ENCODE measurements at regions of chr6 and their contacts with region 1.

Region 1: DNA sequence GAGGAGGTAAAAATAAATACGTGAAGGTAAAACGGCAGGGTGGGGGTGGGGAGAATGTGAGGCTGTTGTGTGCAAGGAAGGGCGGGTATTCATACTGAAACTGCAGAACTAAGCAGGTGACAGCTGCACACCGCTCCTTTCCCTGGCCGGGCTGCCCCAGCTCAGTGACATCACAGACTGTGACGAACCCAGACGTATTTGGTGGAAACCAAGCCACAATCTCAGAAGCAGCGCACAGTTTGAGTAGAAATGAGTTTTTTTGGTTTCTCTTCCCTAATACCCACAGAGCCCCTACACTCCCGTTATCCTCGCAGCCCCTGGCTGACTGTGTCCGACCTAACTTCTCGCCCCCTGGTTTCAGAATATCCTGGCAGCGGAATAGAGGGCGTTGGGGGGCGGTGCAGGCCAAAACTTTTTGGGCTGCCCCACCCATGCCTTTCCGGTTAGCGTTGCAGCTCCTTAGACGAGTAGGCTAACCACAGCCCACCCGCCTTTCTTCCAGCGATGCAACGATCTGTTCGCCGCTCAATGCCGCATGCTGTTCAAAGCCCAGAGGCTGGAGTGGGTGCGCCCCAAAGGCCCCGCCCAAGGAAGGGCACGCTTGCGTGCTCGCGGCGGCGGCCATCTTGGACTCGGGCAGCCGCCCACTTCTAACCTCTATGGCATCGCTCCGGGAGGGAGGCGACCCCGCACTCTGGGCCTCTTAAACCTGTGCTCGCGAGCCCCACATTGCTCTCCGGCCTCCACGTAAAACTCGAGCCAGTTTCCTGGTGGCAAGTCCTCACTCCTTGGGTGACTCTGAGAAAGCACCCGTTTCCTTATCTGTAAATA is 9.1 kb downstream of the BAK1 start:
- DNase-seq: peak; percentile 92 to 98 (median 95)
- H3K4me3 ChIP-seq: peak overlapping the region; percentile 13 to 72
- H3K4me3 Mint-ChIP-seq: peak overlapping the region; percentile 90 to 97 (median 94)
- H3K27ac ChIP-seq: peak overlapping the region; percentile 93
- H3K27ac Mint-ChIP-seq: peak overlapping the region; percentile 99 to 100 (median 100)
- H3K4me1 ChIP-seq: peaks cover 23% of the 10 kb centered on the region
- H3K4me1 Mint-ChIP-seq: peaks cover 12 to 44% (median 31%) of the 10 kb centered on the region in 4 donors
- H3K27me3 ChIP-seq: no peaks in the 10 kb centered on the region
- H3K27me3 Mint-ChIP-seq: no peaks in the 10 kb centered on the region

Region 2: DNA sequence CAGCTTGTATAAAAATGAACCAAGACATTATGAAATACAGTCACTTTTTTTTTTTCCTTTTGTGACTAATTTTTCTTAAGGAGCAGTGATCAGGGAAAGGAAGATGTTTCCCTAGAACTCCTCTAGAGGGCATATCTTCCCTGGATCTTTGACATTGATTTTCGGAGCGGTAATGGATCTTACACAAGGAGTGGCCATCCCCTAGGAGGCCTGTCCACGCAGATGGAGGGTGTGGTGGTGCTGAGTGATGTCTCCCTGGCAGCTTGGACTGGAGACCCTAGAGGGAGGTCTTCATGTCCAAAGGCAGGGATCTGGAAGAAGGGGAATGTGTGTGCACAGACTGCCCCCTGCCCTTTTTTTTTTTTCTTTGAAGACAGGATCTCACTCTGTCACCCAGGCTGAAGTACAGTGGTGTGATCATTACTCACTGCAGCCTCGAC is 186.4 kb before region 1 on chr6:
- CTCF ChIA-PET with region 1: no interaction called
- POLR2A ChIA-PET with region 1: no interaction called
- intact Hi-C with region 1: no loop called
- DNase-seq: no peak
- H3K4me3 ChIP-seq: no peak overlapping the region
- H3K4me3 Mint-ChIP-seq: no peak overlapping the region
- H3K27ac ChIP-seq: no peak overlapping the region
- H3K27ac Mint-ChIP-seq: no peak overlapping the region
- H3K4me1 ChIP-seq: no peaks in the 10 kb centered on the region
- H3K4me1 Mint-ChIP-seq: no peaks in the 10 kb centered on the region
- H3K27me3 ChIP-seq: no peaks in the 10 kb centered on the region
- H3K27me3 Mint-ChIP-seq: no peaks in the 10 kb centered on the region

Region 3: GRCh38 chr6:33417903-33418689 is 152.9 kb before region 1 on chr6 and contains the start of gene CUTA:
- CTCF ChIA-PET with region 1: no interaction called
- POLR2A ChIA-PET with region 1: interaction called, 15 read pairs
- intact Hi-C with region 1: loop called (anchors 2 kb)
- DNase-seq: peak; percentile 97 to 100 (median 100)
- H3K4me3 ChIP-seq: peak within 1 kb of the TSS; percentile 82 to 94
- H3K4me3 Mint-ChIP-seq: peak within 1 kb of the TSS; percentile 87 to 97 (median 94)
- H3K27ac ChIP-seq: peak within 1 kb of the TSS; percentile 97
- H3K27ac Mint-ChIP-seq: peak within 1 kb of the TSS; percentile 99 to 100 (median 99)
- H3K4me1 ChIP-seq: peaks cover 72% of the 10 kb centered on the region
- H3K4me1 Mint-ChIP-seq: peaks cover 43 to 87% (median 61%) of the 10 kb centered on the region in 4 donors
- H3K27me3 ChIP-seq: no peaks in the 10 kb centered on the region
- H3K27me3 Mint-ChIP-seq: no peaks in the 10 kb centered on the region
- total RNA-seq, gene CUTA: 210 to 217 TPM

Region 4: GRCh38 chr6:33454009-33454946 is 116.7 kb before region 1 on chr6 and contains the start of gene ZBTB9:
- CTCF ChIA-PET with region 1: no interaction called
- POLR2A ChIA-PET with region 1: interaction called, 24 read pairs
- intact Hi-C with region 1: loop called (anchors 2 kb)
- DNase-seq: peak; percentile 92 to 96 (median 92)
- H3K4me3 ChIP-seq: peak within 1 kb of the TSS; percentile 84 to 89
- H3K4me3 Mint-ChIP-seq: peak within 1 kb of the TSS; percentile 93 to 99 (median 97)
- H3K27ac ChIP-seq: peak within 1 kb of the TSS; percentile 78
- H3K27ac Mint-ChIP-seq: peak within 1 kb of the TSS; percentile 82 to 98 (median 95)
- H3K4me1 ChIP-seq: peaks cover 29% of the 10 kb centered on the region
- H3K4me1 Mint-ChIP-seq: peaks cover 14 to 43% (median 29%) of the 10 kb centered on the region in 4 donors
- H3K27me3 ChIP-seq: no peaks in the 10 kb centered on the region
- H3K27me3 Mint-ChIP-seq: no peaks in the 10 kb centered on the region
- total RNA-seq, gene ZBTB9: 12.1 to 12.8 TPM

Region 5: GRCh38 chr6:33535104-33535603 is 35.9 kb before region 1 on chr6:
- CTCF ChIA-PET with region 1: no interaction called
- POLR2A ChIA-PET with region 1: interaction called, 20 read pairs
- intact Hi-C with region 1: loop called (anchors 2 kb)
- DNase-seq: no peak
- H3K4me3 ChIP-seq: no peak overlapping the region
- H3K4me3 Mint-ChIP-seq: no peak overlapping the region
- H3K27ac ChIP-seq: no peak overlapping the region
- H3K27ac Mint-ChIP-seq: no peak overlapping the region
- H3K4me1 ChIP-seq: peaks cover 7% of the 10 kb centered on the region
- H3K4me1 Mint-ChIP-seq: peaks cover 11 to 25% (median 18%) of the 10 kb centered on the region in 4 donors
- H3K27me3 ChIP-seq: no peaks in the 10 kb centered on the region
- H3K27me3 Mint-ChIP-seq: no peaks in the 10 kb centered on the region

Measured in CD4-positive, alpha-beta memory T cell (primary cell).